Activated CD4-positive, alpha-beta T cell treated with anti-CD3 and anti-CD28 coated beads for 36 hours (primary cell): ENCODE measurements at regions of chr1 and their contacts with region 1.

Region 1: DNA sequence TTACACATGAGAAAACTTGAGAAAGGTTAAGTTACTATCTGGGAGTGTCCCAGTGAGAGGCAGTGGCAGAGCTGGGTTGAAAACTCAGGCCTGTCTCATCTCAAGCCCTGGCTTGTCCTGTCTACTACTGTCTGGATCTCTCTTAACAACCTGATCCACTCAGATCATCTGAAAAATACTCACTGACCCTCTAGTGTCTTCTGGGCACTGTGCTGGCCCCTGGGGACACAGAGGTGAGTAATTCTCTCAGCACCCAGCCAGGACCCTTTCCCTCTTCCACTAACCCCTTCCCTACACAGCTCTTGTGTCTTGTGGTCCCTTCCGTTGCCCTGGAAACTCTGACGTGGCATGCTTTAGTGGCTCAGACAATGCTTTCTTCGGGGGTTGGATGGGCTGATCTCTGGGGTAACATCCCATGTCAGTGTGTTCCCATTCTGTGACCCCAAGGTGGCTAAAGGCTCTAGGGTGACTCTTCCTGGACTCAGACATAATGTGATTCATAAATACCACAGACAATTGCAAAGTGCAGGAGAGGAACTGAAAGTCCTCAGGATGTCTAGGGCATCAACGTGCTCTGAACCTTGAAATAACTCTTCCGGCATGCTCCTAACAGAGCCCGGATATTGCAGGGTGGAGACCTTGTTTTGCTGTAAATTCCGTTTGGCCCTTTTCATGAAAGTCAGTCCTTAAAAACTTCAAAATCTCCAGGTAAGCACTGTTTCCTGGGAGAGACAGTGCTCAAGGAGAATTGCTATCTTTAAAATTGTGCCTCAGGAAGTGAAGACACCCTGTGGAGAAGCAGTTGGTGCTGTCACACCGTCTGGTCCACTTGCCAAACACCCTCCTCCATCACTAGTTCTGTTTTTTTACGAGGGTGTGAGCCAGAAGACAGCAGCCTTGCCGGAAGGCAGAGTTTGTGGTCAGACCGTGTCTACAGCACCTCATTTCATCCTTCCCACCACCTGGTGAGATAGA is 4.0 kb downstream of the SHISAL2A start:
- DNase-seq: peak; percentile 84
- ATAC-seq: peak; percentile 62
- H3K4me3 Mint-ChIP-seq: peak overlapping the region; percentile 68
- H3K27ac Mint-ChIP-seq: peak overlapping the region; percentile 97
- H3K4me1 Mint-ChIP-seq: peaks cover 74% of the 10 kb centered on the region
- H3K27me3 Mint-ChIP-seq: no peaks in the 10 kb centered on the region

Region 2: DNA sequence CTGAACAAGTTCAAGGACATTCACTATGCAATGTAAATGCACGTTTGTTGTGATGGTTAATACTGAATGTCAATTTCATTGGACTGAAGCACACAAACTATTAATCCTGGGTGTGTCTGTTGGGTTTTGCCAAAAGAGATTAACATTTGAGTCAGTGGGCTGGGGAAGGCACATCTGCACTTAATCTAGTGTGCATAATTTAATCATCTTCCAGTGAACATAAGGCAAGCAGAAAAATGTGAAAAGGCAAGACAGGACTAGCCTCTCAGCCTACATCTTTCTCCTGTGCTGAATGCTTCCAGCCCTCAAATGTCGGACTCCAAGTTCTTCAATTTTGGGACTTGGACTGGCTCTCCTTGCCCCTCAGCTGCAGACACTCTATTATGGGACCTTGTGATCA is 192.5 kb before region 1 on chr1:
- CTCF ChIA-PET with region 1: no interaction called
- POLR2A ChIA-PET with region 1: no interaction called
- intact Hi-C with region 1: no loop called
- DNase-seq: no peak
- ATAC-seq: no peak
- H3K4me3 Mint-ChIP-seq: no peak overlapping the region
- H3K27ac Mint-ChIP-seq: no peak overlapping the region
- H3K4me1 Mint-ChIP-seq: no peaks in the 10 kb centered on the region
- H3K27me3 Mint-ChIP-seq: no peaks in the 10 kb centered on the region

Region 3: GRCh38 chr1:52601991-52602855 is 34.8 kb before region 1 on chr1 and contains the start of gene GPX7:
- CTCF ChIA-PET with region 1: interaction called, 5 read pairs
- POLR2A ChIA-PET with region 1: no interaction called
- intact Hi-C with region 1: loop called (anchors 1 to 2 kb)
- DNase-seq: peak; percentile 72
- ATAC-seq: peak; percentile 70
- H3K4me3 Mint-ChIP-seq: peak within 1 kb of the TSS; percentile 86
- H3K27ac Mint-ChIP-seq: peak within 1 kb of the TSS; percentile 94
- H3K4me1 Mint-ChIP-seq: peaks cover 40% of the 10 kb centered on the region
- H3K27me3 Mint-ChIP-seq: no peaks in the 10 kb centered on the region
- total RNA-seq, gene GPX7: 19.0 to 23.1 TPM

Region 4: GRCh38 chr1:52662645-52663313 is 25.8 kb after region 1 on chr1:
- CTCF ChIA-PET with region 1: interaction called, 3 read pairs
- POLR2A ChIA-PET with region 1: interaction called, 3 read pairs
- intact Hi-C with region 1: loop called (anchors 1 kb)
- DNase-seq: no peak
- ATAC-seq: no peak
- H3K4me3 Mint-ChIP-seq: no peak overlapping the region
- H3K27ac Mint-ChIP-seq: no peak overlapping the region
- H3K4me1 Mint-ChIP-seq: peaks cover 16% of the 10 kb centered on the region
- H3K27me3 Mint-ChIP-seq: no peaks in the 10 kb centered on the region

Region 5: GRCh38 chr1:52927212-52928014 is 290.4 kb after region 1 on chr1 and contains the start of gene SCP2:
- CTCF ChIA-PET with region 1: no interaction called
- POLR2A ChIA-PET with region 1: no interaction called
- intact Hi-C with region 1: loop called in 1 of 2 experiments (anchors 10 kb)
- DNase-seq: peak; percentile 90
- ATAC-seq: peak; percentile 94
- H3K4me3 Mint-ChIP-seq: peak within 1 kb of the TSS; percentile 78
- H3K27ac Mint-ChIP-seq: peak within 1 kb of the TSS; percentile 68
- H3K4me1 Mint-ChIP-seq: peaks cover 14% of the 10 kb centered on the region
- H3K27me3 Mint-ChIP-seq: no peaks in the 10 kb centered on the region
- total RNA-seq, gene SCP2: 46.6 to 67.1 TPM